HEK293T (cell line): ENCODE measurements at regions of chr13 and their contacts with region 1.

Region 1: DNA sequence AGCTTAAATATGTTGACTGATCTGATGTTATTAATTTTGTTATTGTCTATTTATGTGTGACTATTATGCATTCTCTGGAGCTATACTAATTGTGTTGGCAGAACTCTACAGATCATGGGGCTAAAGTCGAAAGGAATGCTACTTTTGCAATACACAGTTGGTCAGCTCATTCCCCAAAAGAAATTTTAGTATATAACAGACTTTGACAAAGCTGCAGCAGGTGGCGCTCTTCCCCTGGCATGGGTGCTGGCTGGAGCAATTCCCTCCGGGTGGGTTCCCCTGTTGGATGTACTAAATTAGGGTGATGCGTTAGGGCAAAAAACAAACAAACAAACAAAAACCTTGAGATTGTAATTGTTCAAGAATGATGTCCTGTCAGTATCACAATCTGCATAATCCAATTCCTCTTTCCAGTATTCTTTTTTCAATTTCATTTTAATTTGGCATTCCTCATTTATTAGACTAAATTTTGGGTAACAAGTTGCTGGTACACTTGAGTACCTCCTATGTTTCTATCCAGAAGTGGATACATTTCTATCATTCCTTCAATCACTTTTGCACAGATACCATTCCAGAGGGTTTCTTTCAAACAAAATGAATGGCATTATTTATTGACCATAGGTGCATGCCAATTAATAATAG is 322.8 kb upstream of the EDNRB start:
- DNase-seq: peak; percentile 85

Region 2: DNA sequence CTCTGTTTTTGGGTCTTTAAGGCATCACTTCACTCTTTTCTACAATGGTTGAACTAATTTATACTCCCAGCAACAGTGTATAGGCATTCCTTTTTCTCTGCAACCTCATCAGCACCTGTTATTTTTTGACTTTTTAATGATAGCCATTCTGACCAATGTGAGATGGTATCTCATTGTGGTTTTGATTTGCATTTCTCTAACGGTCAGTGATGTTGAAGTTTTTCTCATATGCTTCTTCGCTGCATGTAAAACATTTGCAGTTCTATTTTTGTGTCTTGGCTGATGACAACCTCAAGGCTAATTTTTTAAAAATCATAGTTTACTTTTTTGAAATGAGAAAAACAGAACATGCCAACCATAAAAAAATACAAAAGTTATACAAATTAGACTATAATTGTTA is 64.5 kb before region 1 on chr13:
- CTCF ChIA-PET with region 1: no interaction called
- POLR2A ChIA-PET with region 1: no interaction called
- DNase-seq: no peak

Region 3: DNA sequence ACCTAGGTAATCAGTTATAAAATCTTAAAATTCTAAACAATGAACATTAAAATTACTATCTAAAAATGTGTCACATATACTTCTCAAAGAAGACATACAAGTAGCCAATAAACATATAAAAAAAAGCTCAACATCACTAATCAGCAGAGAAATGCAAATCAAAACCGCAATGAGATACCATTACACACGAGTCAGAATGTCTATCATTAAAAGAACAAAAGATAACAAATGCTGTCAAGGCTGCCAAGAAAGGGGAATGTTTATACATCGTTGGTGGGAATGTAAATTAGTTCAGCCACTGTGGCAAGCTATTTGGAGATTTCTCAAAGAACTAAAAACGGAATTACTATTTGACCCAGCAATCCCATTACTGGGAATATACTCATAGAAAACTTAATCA is 12.5 kb before region 1 on chr13:
- CTCF ChIA-PET with region 1: interaction called, 11 read pairs
- POLR2A ChIA-PET with region 1: no interaction called
- DNase-seq: no peak

Region 4: GRCh38 chr13:78978381-78978998 is 737.1 kb after region 1 on chr13:
- CTCF ChIA-PET with region 1: interaction called, 26 read pairs
- POLR2A ChIA-PET with region 1: no interaction called
- DNase-seq: peak; percentile 81